ENCODE measurements at regions of chr3 and their contacts with region 1.

Region 1: GRCh38 chr3:72380193-72380592 is 468.1 kb downstream of the SHQ1 start:
- DNase-seq: no peak

Region 2: DNA sequence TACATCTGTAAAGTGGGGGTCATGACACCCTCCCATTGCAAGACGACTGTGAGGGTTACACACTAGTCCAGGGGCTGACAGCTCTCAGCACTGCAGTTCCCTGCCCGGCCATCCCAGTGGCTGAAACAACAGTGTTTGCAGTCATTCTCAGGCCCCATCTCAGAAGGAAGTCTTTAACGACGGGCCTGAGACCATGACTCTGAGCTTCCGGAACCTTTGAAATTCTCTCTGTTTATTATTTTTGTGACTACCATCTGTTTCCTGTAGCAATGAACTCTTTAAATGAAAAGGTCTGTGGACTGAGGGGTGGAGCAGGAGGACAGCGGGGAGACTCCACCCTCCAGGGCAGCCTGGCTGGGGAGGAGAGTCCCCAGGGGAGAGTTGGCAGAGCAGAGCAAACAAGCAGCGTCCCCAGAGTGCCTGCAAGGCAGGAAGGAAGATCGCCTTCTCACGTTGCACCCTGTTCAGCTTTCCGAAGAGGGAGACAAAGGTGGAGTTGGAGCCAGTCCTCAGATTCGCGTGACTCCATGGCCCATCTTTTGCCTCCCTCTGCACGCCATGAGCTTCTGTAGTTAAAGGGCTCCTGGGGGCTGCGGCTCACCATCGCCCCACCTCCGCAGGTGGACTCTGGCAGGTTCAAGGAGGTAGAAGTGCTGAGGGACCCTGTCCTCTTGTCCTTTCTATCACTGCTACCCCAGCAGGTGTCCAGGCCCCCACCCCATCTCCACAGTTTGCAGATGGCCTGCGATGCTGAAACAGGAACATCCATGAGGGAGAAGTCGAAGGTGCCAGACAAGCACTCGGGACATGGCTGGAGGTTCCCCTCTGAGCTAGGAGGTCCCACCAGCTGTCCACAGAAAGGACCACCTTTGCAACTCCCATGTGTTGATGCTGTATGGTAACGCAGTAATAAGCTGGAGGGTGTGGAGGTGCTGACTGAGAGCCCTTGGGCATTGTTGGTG is 69.5 kb before region 1 on chr3:
- intact Hi-C with region 1: no loop called
- DNase-seq: no peak

Region 3: GRCh38 chr3:72339116-72340030 is 40.8 kb before region 1 on chr3:
- intact Hi-C with region 1: loop called (anchors 5 kb)
- DNase-seq: peak in 3 of 10 donors; percentile 20 to 87 (median 30)

Region 4: GRCh38 chr3:72447059-72447946 is 67.1 kb after region 1 on chr3:
- intact Hi-C with region 1: loop called (anchors 2 kb)
- DNase-seq: peak; percentile 83 to 99 (median 88)